Esophagus muscularis mucosa (tissue), 4 donors: ENCODE measurements at regions of chr3 and their contacts with region 1.

Region 1: GRCh38 chr3:30768703-30769685 is 125.5 kb downstream of the GADL1 start:
- DNase-seq: no peak
- H3K4me3 ChIP-seq: no peak overlapping the region
- H3K27ac ChIP-seq: no peak overlapping the region
- H3K4me1 ChIP-seq: peaks cover 0 to 16% (median 10%) of the 10 kb centered on the region in 4 donors
- H3K27me3 ChIP-seq: no peaks in the 10 kb centered on the region
- CTCF ChIP-seq: peak; percentile 70 to 80 (median 79)
- EP300 ChIP-seq: no peak
- POLR2A ChIP-seq: no peak

Region 2: GRCh38 chr3:30894538-30895251 is 125.7 kb after region 1 on chr3 and contains the start of gene GADL1:
- intact Hi-C with region 1: no loop called
- DNase-seq: no peak
- H3K4me3 ChIP-seq: peak within 1 kb of the TSS; percentile 65 to 87 (median 74)
- H3K27ac ChIP-seq: peak within 1 kb of the TSS; percentile 73 to 79 (median 78)
- H3K4me1 ChIP-seq: peaks cover 0 to 27% (median 17%) of the 10 kb centered on the region in 4 donors
- H3K27me3 ChIP-seq: no peaks in the 10 kb centered on the region
- CTCF ChIP-seq: no peak
- EP300 ChIP-seq: no peak
- POLR2A ChIP-seq: no peak
- total RNA-seq, gene GADL1: 1.7 to 4.6 (median 3.0) TPM

Region 3: GRCh38 chr3:30934208-30934550 is 165.2 kb after region 1 on chr3:
- intact Hi-C with region 1: loop called (anchors 5 kb)
- DNase-seq: no peak
- H3K4me3 ChIP-seq: peak overlapping the region in 1 of 4 donors; percentile 24
- H3K27ac ChIP-seq: no peak overlapping the region
- H3K4me1 ChIP-seq: peaks cover 0 to 12% (median 6%) of the 10 kb centered on the region in 4 donors
- H3K27me3 ChIP-seq: no peaks in the 10 kb centered on the region
- CTCF ChIP-seq: peak; percentile 45 to 63 (median 51)
- EP300 ChIP-seq: no peak
- POLR2A ChIP-seq: no peak

Region 4: GRCh38 chr3:30948426-30948825 is 179.4 kb after region 1 on chr3:
- intact Hi-C with region 1: no loop called
- DNase-seq: no peak
- H3K4me3 ChIP-seq: no peak overlapping the region
- H3K27ac ChIP-seq: no peak overlapping the region
- H3K4me1 ChIP-seq: no peaks in the 10 kb centered on the region
- H3K27me3 ChIP-seq: no peaks in the 10 kb centered on the region
- CTCF ChIP-seq: no peak
- EP300 ChIP-seq: no peak
- POLR2A ChIP-seq: no peak

Region 5: DNA sequence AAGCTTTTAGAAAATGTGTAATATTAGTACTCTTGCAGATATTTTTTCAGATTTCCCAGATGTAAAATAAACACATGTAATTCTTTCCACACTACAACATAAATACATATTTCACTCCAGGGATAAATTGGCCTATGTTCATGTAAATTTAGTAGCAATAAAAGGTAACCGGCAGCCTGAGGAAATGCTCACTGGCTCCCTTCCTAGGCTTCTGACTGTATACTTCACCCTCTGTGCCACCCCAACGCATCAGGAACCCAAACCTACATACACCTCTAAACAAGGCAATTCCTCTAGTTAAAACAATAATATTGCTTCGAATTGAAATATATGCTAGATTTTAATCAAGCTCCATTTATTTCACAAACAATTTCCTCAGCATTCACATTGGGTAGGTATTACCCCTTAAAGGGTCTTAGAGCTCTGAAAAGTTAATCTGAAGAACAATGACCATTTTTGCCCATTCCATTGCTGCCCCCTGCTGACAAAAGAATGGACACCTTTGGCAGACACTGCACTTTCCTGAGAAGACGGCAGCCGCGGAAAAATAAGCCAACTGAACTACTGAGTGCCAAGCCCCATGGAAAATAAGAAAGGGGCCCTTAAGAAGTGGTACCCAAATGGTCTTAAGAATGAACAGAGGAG is 999.6 kb after region 1 on chr3:
- intact Hi-C with region 1: loop called (anchors 10 kb)
- DNase-seq: no peak
- H3K4me3 ChIP-seq: no peak overlapping the region
- H3K27ac ChIP-seq: no peak overlapping the region
- H3K4me1 ChIP-seq: peaks cover 0 to 5% (median 2%) of the 10 kb centered on the region in 4 donors
- H3K27me3 ChIP-seq: no peaks in the 10 kb centered on the region
- CTCF ChIP-seq: peak; percentile 55 to 69 (median 66)
- EP300 ChIP-seq: no peak
- POLR2A ChIP-seq: no peak